Heart left ventricle (tissue), 16 donors: ENCODE measurements at regions of chr1 and their contacts with region 1.

Region 1: DNA sequence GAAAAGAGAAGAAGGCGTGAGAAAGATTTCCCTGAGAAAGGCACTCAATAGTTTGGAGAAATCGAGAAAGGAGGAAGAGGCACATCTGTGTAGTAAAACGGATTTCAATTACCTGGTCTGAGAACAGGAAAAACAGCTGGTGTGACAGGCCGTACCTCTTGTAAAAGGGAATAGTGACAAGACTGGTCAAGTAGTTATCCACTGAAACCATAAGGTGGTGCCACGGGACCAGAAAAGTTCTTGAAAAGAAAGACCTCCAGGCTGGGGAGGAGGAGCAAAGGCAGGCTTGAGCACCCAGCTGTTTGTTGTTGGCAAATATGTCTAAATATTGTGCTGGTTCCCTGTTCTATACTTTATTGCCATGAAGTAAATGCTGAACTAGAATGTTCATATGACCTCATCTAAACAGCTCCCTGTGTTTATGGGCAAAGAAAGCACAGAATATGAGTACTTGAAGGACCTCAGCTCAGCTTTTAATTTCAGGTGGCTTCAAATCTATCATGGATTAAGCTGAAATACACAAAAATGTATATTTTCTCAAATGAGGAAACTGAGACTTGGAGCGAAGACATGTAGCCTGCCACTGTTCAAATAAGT is 4.0 kb downstream of the HAO2 start:
- DNase-seq: peak in 1 of 5 donors; percentile 11
- ATAC-seq: no peak
- H3K4me3 ChIP-seq: no peak overlapping the region
- H3K27ac ChIP-seq: no peak overlapping the region
- H3K4me1 ChIP-seq: no peaks in the 10 kb centered on the region
- H3K27me3 ChIP-seq: peaks cover 0 to 5% (median 0%) of the 10 kb centered on the region in 9 donors
- CTCF ChIP-seq: peak in 5 of 12 donors; percentile 14 to 30 (median 26)
- POLR2A ChIP-seq: no peak

Region 2: DNA sequence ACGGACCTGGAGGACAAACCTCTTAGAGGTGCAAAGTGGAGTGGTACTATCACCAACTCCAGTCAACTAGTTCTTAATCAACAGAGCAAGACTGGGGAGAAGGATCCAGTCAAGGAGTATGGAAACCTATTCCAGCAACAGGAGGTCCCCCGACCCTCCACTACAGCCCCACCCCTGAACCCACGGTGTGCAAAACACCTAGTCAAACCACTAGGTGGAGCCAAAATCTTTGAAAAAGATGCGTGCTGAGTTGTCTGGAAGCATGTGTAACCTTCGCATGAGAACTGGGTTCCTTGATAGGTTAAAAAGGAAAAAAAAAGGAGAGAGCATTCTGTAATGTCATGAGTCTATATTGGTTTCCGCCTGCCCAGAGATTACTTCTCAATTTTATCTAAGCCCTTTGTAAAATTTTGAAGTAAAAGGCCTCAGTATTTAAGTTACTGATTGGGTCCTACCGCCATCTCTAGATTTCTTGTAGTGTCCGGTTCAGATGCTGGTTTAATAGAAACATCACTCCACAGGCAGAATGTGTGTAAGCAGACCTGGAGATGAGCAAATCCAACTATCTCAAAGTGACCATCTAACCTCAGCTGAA is 85.9 kb before region 1 on chr1:
- intact Hi-C with region 1: loop called in 5 of 10 experiments (anchors 2 to 10 kb)
- DNase-seq: no peak
- ATAC-seq: peak in 1 of 4 donors; percentile 16
- H3K4me3 ChIP-seq: no peak overlapping the region
- H3K27ac ChIP-seq: no peak overlapping the region
- H3K4me1 ChIP-seq: no peaks in the 10 kb centered on the region
- H3K27me3 ChIP-seq: no peaks in the 10 kb centered on the region
- CTCF ChIP-seq: peak in 9 of 12 donors; percentile 19 to 50 (median 37)
- POLR2A ChIP-seq: no peak